ENCODE measurements at regions of chr9 and their contacts with region 1.

Region 1: GRCh38 chr9:18861609-18862544 is 171.1 kb downstream of the SAXO1 start:
- DNase-seq: peak; percentile 79
- H3K4me3 ChIP-seq: no peak overlapping the region
- H3K27ac ChIP-seq: peak overlapping the region; percentile 39 to 65 (median 43)
- H3K4me1 ChIP-seq: peaks cover 0 to 18% (median 18%) of the 10 kb centered on the region in 4 donors
- H3K27me3 ChIP-seq: no peaks in the 10 kb centered on the region
- CTCF ChIP-seq: no peak
- EP300 ChIP-seq: no peak
- POLR2A ChIP-seq: no peak

Region 2: GRCh38 chr9:18459958-18460584 is 401.8 kb before region 1 on chr9:
- intact Hi-C with region 1: loop called (anchors 10 kb)
- DNase-seq: no peak
- H3K4me3 ChIP-seq: no peak overlapping the region
- H3K27ac ChIP-seq: peak overlapping the region in 1 of 4 donors; percentile 14
- H3K4me1 ChIP-seq: no peaks in the 10 kb centered on the region
- H3K27me3 ChIP-seq: no peaks in the 10 kb centered on the region
- CTCF ChIP-seq: no peak
- EP300 ChIP-seq: no peak
- POLR2A ChIP-seq: no peak

Region 3: GRCh38 chr9:18658764-18659705 is 202.8 kb before region 1 on chr9:
- intact Hi-C with region 1: no loop called
- DNase-seq: no peak
- H3K4me3 ChIP-seq: no peak overlapping the region
- H3K27ac ChIP-seq: no peak overlapping the region
- H3K4me1 ChIP-seq: no peaks in the 10 kb centered on the region
- H3K27me3 ChIP-seq: no peaks in the 10 kb centered on the region
- CTCF ChIP-seq: no peak
- EP300 ChIP-seq: no peak
- POLR2A ChIP-seq: no peak

Region 4: DNA sequence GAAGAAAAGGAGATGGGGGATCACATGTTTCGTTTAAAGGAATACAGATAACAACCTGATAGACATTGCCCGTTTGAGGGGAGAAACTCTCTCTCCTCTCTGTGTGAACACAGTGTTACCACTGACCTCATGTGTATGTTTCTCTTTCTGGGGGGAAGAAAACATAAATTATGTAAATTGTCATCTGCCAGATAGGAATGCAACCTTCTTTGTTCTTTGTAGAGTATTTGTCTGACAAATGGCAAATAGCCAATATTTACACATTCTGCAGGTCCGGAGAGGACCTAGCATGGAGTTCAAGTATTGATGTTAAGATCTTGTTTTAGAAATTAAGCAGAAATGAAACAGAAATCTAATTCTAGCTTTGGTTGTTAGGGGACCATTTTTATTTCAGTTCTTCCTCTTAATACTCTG is 105.2 kb before region 1 on chr9:
- intact Hi-C with region 1: loop called (anchors 10 kb)
- DNase-seq: no peak
- H3K4me3 ChIP-seq: no peak overlapping the region
- H3K27ac ChIP-seq: no peak overlapping the region
- H3K4me1 ChIP-seq: peaks cover 0 to 9% (median 5%) of the 10 kb centered on the region in 4 donors
- H3K27me3 ChIP-seq: no peaks in the 10 kb centered on the region
- CTCF ChIP-seq: no peak
- EP300 ChIP-seq: no peak
- POLR2A ChIP-seq: no peak

Region 5: GRCh38 chr9:18874069-18874468 is 12.2 kb after region 1 on chr9:
- intact Hi-C with region 1: no loop called
- DNase-seq: no peak
- H3K4me3 ChIP-seq: no peak overlapping the region
- H3K27ac ChIP-seq: no peak overlapping the region
- H3K4me1 ChIP-seq: no peaks in the 10 kb centered on the region
- H3K27me3 ChIP-seq: no peaks in the 10 kb centered on the region
- CTCF ChIP-seq: no peak
- EP300 ChIP-seq: no peak
- POLR2A ChIP-seq: no peak

Region 6: GRCh38 chr9:19018201-19018600 is 156.3 kb after region 1 on chr9:
- intact Hi-C with region 1: loop called (anchors 10 kb)
- DNase-seq: no peak
- H3K4me3 ChIP-seq: no peak overlapping the region
- H3K27ac ChIP-seq: no peak overlapping the region
- H3K4me1 ChIP-seq: no peaks in the 10 kb centered on the region
- H3K27me3 ChIP-seq: no peaks in the 10 kb centered on the region
- CTCF ChIP-seq: no peak
- EP300 ChIP-seq: no peak
- POLR2A ChIP-seq: no peak

Region 7: DNA sequence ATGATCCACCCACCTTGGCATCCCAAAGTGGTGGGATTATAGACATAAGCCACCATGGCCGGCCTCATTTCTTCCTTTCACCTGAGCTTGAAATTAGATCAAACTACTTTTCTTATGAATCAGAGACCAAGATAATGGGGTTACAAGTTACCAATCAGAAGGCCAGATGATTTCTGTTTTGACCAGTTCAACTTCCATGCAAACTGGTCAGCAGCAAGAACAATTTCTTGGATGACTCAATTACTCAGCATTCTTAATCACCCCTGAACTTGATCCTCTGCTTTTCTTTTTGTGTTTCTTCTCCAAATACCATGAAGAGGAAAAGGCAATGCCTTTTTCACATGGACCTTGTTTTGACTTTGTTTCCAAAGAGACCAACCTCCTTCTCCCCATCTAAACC is 275.4 kb after region 1 on chr9:
- intact Hi-C with region 1: no loop called
- DNase-seq: no peak
- H3K4me3 ChIP-seq: no peak overlapping the region
- H3K27ac ChIP-seq: no peak overlapping the region
- H3K4me1 ChIP-seq: no peaks in the 10 kb centered on the region
- H3K27me3 ChIP-seq: no peaks in the 10 kb centered on the region
- CTCF ChIP-seq: no peak
- EP300 ChIP-seq: no peak
- POLR2A ChIP-seq: no peak